Activated CD4-positive, alpha-beta memory T cell treated with anti-CD3 and anti-CD28 coated beads for 36 hours (primary cell): ENCODE measurements at regions of chr7 and their contacts with region 1.

Region 1: GRCh38 chr7:118352854-118353453 is 128.4 kb downstream of the ANKRD7 start:
- DNase-seq: no peak
- H3K4me3 Mint-ChIP-seq: no peak overlapping the region
- H3K27ac Mint-ChIP-seq: no peak overlapping the region
- H3K4me1 Mint-ChIP-seq: no peaks in the 10 kb centered on the region
- H3K27me3 Mint-ChIP-seq: no peaks in the 10 kb centered on the region

Region 2: DNA sequence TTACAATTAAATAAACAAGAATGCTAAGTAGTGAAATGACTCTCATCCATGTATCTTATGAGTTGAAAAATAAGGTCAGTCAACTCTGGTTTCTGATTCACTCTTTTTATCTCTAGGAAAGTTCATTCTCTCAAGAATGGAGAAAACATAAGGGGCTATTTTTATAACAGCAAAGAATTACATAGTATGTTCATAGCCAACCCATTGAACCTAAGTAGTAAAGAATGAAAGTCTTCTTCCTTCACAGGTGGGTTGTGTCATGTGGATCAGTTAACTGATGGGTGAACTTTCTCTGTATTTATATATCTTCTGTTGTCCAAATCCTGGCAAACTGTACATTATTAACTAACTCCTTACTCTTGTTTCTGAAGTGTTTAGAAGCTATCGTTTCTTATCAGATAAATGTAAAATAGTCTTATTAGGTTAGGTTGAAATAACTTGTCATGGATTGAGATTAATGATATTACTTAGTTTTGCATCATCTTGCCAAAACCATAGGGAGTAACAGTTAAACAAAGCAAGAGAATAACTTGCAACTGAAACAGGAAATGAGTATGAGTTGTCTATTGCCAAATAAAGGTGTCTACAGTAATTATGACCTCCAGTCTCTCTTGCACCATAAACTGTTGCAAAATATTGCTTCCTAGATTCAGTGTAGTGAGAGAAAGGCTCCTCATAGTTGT is 41.7 kb before region 1 on chr7:
- CTCF ChIA-PET with region 1: no interaction called
- POLR2A ChIA-PET with region 1: no interaction called
- intact Hi-C with region 1: no loop called
- DNase-seq: no peak
- H3K4me3 Mint-ChIP-seq: no peak overlapping the region
- H3K27ac Mint-ChIP-seq: no peak overlapping the region
- H3K4me1 Mint-ChIP-seq: no peaks in the 10 kb centered on the region
- H3K27me3 Mint-ChIP-seq: peaks cover 6% of the 10 kb centered on the region

Region 3: DNA sequence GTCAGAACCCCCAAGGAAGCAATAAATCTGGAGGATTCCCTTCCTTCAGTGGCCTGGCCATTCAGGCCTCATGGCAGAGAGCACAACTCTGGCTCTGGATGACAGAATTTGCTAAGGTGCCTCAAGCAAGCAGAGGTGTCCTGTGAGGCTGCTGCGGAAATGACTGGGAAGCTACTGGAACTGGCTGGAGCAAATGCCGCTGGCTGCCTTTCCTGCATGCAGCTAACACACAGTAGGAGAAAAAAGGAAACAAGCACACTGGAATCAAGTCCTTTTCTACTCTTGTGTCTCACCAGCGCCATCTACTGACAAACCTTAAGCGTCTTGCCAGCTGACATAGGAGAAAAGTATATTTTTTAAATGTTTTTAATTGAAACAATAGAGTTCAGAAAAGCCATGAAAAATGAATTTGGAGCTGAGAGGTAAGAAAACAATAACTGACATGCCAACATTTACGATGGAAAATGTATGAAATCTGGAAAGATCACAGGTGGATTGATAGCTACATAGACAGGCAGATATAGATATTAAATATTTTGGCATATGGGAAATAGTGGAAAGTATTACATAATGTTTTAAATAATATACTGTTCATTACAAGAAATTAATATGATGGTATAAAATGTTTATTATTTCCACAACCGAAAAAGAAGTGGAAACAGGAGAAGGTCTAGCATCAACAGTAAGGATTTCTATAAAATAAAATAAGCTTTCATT is 823.1 kb after region 1 on chr7:
- CTCF ChIA-PET with region 1: no interaction called
- POLR2A ChIA-PET with region 1: no interaction called
- intact Hi-C with region 1: loop called (anchors 5 kb)
- DNase-seq: peak; percentile 27
- H3K4me3 Mint-ChIP-seq: no peak overlapping the region
- H3K27ac Mint-ChIP-seq: no peak overlapping the region
- H3K4me1 Mint-ChIP-seq: no peaks in the 10 kb centered on the region
- H3K27me3 Mint-ChIP-seq: no peaks in the 10 kb centered on the region